ENCODE measurements at regions of chr6 and their contacts with region 1.

Region 1: DNA sequence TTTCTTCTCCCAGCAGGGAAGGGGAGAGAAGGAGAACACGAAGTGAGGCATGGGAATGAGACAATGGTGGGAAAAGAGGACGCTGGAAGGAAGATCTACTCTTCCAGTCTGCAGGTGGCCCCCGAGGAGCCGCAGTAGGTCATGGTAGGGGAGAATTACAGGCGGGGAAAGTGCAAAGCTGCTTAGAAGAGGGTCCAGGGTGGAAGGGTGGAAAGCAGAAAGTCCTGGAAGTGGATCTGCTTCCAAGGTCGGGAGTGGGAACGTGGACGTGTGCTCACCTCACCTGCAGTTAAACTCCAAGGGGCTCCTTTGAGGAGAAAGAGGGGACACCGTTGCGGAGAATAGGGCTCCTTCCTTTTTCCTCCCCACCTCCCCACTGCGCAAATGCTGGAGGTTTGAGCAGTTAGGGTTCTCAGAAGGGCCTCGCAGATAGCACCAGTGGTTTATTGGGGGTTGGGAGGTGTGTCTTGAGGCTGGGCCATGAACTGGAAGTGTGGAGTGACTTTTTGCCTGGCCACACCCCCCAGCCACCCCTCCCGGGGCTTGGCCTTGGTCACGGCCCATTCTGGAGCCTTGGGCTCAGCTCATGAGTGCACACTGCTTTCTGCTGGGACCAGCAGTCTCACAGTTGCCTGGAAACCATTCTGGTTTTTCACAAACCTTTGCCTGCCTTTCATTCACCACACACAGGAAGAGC is 100.4 kb upstream of the MLN start:
- DNase-seq: peak; percentile 95
- H3K4me3 Mint-ChIP-seq: peak overlapping the region; percentile 73
- H3K27ac Mint-ChIP-seq: peak overlapping the region; percentile 99
- H3K4me1 Mint-ChIP-seq: peaks cover 62% of the 10 kb centered on the region
- H3K27me3 Mint-ChIP-seq: peaks cover 11% of the 10 kb centered on the region

Region 2: DNA sequence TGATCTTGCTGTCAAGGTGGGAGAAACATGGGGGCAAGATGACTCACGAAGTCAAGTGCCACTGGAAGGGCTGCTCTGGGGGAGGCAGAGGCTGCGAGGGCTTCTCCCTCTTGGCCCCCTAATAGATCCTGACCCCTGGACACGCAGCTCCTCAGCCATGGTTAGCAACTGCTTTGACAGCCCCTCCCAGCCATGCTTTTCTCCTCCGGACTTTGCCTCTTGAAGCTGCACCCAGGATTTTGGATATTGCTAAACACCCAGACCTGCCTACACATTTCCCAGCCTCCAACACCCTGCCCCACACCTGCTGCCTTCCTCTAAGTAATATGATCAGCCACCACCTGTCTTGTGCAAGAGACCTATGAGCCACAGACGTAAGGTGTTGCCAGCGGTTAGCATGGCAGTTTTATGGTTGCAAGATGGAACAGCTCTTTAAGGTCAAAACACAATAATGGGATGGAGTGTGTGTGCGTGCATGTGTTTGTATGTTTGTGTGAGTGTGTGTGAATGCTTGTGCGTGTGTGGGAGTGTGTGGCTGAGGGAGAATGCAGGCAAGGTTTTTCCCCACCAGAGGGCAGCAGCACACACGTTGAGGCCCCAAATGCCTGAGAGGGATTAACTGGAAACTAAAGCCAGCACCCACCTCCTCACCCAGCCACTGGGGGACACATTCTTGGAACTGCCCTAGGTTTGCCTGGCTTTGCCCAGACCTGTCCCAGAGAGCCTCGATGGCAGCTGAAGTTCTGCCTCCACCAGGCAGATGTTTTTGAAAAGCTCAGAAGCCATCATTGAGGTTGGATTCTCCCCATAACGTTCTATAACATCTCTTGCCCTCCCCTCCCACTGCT is 160.0 kb before region 1 on chr6:
- CTCF ChIA-PET with region 1: no interaction called
- POLR2A ChIA-PET with region 1: no interaction called
- DNase-seq: peak; percentile 76
- H3K4me3 Mint-ChIP-seq: no peak overlapping the region
- H3K27ac Mint-ChIP-seq: no peak overlapping the region
- H3K4me1 Mint-ChIP-seq: no peaks in the 10 kb centered on the region
- H3K27me3 Mint-ChIP-seq: peaks cover 21% of the 10 kb centered on the region

Region 3: DNA sequence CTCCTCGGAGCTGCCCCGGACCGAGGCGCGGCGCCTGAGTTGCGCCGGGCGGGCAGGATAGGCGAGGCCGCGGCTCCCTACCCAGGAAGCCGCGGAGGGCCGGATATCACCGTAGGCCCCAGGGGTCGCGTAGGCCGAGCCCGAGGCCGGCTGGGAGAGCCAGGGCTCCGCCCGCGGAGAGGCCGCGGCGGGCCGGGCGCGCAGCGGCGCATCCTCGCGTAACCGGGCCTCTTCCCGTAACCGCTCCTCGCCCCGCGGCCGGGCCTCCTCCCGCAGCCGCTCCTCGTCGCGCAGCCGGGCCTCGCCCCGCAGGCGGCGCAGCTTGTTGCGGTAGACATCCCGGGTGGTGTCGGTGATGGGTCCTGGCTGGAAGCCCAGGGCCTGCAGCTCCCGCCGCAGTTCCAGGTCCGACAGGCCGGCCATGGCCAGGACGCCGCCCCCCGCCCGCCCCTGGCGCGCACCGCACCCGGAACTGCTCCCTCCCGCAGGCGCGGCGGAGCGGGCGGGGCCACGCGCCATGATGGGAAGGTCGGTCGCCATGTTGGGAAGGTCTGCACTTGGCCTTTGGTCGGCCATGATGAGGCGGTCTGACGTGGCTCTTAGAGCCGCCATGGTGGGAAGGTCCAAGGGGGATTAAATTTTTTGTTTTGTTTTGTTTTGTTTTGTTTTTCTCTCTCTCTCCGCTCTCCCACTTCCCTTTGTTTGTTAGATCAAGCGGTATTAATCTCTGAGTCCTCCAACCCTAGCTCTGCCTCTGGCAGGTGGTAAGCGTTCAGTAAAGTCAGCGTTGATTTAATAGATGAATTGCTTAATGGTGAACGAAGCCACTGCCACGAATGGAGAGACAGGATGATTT is 115.3 kb before region 1 on chr6 and contains the start of gene LEMD2:
- CTCF ChIA-PET with region 1: no interaction called
- POLR2A ChIA-PET with region 1: interaction called, 13 read pairs
- DNase-seq: peak; percentile 93
- H3K4me3 Mint-ChIP-seq: peak within 1 kb of the TSS; percentile 96
- H3K27ac Mint-ChIP-seq: peak within 1 kb of the TSS; percentile 98
- H3K4me1 Mint-ChIP-seq: peaks cover 49% of the 10 kb centered on the region
- H3K27me3 Mint-ChIP-seq: peaks cover 19% of the 10 kb centered on the region
- total RNA-seq, gene LEMD2: 70.6 to 76.1 TPM

Region 4: DNA sequence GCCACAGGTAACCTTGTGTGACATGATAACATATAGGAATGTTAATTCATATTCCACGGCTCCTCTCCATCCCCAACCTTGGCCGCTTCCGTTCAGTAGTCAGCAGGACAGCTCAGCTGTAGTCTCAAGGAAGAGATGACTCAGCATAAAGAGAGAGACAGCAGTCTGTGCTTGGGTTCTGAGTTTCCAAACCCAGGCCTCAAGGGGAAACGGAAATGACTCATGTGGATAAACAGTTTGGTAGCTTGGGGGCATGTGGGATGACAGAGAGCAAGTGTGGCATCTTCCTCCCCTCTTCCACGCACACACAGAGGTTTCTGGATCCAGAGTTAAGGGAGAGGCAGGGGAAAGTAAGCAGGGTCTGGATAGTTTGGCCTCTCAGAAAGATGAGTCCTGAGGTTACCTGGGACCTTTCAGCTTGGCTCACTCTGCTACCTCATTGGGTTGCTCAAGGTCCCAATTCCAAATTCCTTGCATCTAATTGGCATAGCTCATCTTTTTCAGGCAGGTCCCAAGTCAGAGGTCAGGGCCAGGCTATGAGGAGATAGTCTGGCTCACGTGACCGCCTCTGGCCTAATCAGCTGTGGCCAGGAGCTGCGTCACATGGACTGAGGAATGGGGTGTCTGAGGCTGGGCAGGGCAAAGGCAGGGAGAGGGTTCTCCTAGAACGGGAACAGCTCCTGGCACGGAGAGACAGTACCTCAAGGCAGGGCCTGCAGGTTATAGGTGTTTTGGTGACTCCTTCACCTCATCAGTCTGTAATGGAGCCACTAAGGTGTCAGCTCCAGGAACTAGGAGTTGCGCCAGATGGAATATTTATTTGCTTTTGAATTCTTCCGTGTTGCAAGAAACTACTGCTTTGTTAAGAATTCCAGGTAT is 63.9 kb before region 1 on chr6:
- CTCF ChIA-PET with region 1: interaction called, 10 read pairs
- POLR2A ChIA-PET with region 1: interaction called, 7 read pairs
- DNase-seq: peak; percentile 68
- H3K4me3 Mint-ChIP-seq: no peak overlapping the region
- H3K27ac Mint-ChIP-seq: peak overlapping the region; percentile 32
- H3K4me1 Mint-ChIP-seq: peaks cover 24% of the 10 kb centered on the region
- H3K27me3 Mint-ChIP-seq: peaks cover 20% of the 10 kb centered on the region

Region 5: DNA sequence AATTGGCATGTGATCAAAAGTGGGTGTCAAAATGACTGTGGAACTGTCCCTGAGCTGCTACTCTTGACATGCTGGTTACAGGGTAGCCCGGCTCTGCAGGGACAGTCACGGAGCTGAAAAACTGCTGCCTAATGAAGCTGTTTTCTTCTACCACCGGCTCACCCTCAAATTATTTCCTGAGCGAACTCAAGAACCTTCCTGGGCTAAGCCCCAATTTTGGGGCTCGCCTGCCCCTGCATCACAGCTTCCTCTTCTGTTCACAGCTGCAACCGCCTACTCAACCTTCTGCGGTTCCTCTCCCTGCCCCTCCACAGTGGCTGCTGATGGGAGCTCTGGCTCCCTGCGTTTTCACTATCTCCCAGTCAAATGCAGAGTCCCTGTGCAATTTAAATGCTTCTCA is 10.4 kb after region 1 on chr6:
- CTCF ChIA-PET with region 1: interaction called, 11 read pairs
- POLR2A ChIA-PET with region 1: interaction called, 29 read pairs
- DNase-seq: peak; percentile 62
- H3K4me3 Mint-ChIP-seq: no peak overlapping the region
- H3K27ac Mint-ChIP-seq: peak overlapping the region; percentile 47
- H3K4me1 Mint-ChIP-seq: peaks cover 32% of the 10 kb centered on the region
- H3K27me3 Mint-ChIP-seq: peaks cover 4% of the 10 kb centered on the region